ENCODE measurements at regions of chr2 and their contacts with region 1.

Region 1: DNA sequence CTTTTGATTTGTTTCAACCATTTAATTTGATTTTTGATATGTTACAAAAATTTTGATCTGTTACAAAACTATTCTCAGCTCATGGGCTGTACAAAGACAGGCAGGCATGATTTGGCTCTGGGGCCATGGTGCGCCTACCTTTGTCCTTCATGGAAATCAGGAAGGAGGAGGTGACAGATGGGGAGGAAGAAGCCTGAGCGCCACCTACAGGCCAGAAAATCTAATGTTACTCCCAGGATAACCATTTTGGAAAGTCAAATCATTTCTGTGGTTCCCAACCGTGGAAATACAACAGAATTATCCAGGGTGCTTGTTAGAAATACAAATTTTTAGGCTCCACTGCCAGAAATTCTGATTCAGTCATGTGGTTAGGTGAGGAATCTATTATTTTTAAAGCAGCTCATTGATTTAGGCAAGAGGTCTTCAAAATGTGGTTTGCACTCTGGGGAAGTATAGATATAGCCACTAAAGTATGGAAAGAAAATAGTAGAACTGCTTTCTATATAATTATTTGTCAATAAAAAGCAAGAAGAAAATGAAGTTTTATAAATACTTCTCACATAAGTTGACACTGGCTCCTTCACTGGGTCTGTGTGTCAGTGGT is 93.9 kb downstream of the EVA1A start:
- DNase-seq: no peak
- ATAC-seq: peak; percentile 69
- H3K4me3 ChIP-seq: no peak overlapping the region
- H3K27ac ChIP-seq: no peak overlapping the region
- H3K4me1 ChIP-seq: no peaks in the 10 kb centered on the region
- H3K27me3 ChIP-seq: no peaks in the 10 kb centered on the region
- CTCF ChIP-seq: peak; percentile 64 to 68 (median 66)
- EP300 ChIP-seq: no peak
- POLR2A ChIP-seq: no peak
- RAD21 ChIP-seq: peak; percentile 81

Region 2: DNA sequence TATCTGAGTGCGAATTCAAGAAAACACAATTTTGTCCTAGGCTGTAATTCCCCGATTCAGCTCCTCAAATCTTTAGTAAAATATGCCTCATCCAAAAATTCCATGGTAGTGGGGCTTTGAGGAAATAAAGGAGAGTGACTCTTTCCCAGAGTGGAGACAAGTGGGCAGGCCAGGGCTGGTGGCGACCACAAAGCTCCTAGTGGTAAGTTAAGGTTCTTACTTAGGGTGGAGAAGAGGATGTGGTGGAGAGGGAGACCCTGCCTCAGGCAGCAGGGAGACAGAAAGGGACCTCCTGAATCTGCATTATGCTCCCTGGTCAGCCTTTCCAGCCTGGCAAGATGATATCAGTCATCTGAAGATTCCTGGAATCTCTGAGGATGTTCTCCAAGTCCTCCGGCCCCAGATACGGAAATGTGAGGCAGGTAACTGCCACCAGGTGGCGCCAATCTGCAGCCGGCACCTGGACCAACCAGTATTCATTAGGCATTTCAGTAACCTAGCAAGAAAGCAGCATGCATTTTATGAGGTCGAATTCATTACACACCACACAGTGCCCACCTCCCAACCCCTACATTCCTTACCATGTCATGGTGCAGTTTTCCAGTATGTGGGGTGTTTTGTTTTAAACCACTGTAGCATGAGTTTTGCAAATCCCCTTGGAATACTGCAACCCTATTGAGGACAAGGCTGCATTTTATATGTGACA is 402.0 kb before region 1 on chr2:
- CTCF ChIA-PET with region 1: interaction called, 33 read pairs
- POLR2A ChIA-PET with region 1: no interaction called
- RAD21 ChIA-PET with region 1: interaction called, 7 read pairs
- SMC1A ChIA-PET with region 1: interaction called, 24 read pairs
- in situ Hi-C with region 1: no loop called
- intact Hi-C with region 1: no loop called
- DNase-seq: no peak
- ATAC-seq: peak; percentile 91
- H3K4me3 ChIP-seq: no peak overlapping the region
- H3K27ac ChIP-seq: no peak overlapping the region
- H3K4me1 ChIP-seq: no peaks in the 10 kb centered on the region
- H3K27me3 ChIP-seq: no peaks in the 10 kb centered on the region
- CTCF ChIP-seq: peak; percentile 67 to 92 (median 89)
- EP300 ChIP-seq: no peak
- POLR2A ChIP-seq: no peak
- RAD21 ChIP-seq: peak; percentile 78

Region 3: DNA sequence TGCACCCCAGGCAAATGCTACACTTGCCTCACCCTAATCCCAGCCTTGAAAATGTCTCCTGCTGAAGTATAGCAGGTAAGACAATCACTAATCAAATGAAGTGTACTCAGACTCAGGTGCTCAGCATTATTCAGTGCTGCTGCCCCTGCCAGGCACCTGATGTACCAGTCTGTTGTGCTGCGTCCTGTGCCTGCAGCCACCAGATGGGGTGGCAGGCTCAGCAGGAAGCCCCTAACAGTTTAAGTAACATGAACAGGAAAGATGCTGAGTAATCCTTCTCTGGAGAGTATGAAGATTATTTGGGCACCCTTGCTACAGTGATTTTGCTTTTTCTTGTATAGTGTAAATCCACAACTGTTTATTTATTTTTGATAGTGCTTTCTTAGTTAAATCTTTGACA is 336.6 kb before region 1 on chr2:
- CTCF ChIA-PET with region 1: interaction called, 12 read pairs
- POLR2A ChIA-PET with region 1: no interaction called
- RAD21 ChIA-PET with region 1: no interaction called
- SMC1A ChIA-PET with region 1: no interaction called
- in situ Hi-C with region 1: no loop called
- intact Hi-C with region 1: no loop called
- DNase-seq: no peak
- ATAC-seq: peak; percentile 64
- H3K4me3 ChIP-seq: no peak overlapping the region
- H3K27ac ChIP-seq: no peak overlapping the region
- H3K4me1 ChIP-seq: no peaks in the 10 kb centered on the region
- H3K27me3 ChIP-seq: no peaks in the 10 kb centered on the region
- CTCF ChIP-seq: peak; percentile 5 to 27 (median 24); a peak in 2 of 6 replicates
- EP300 ChIP-seq: no peak
- POLR2A ChIP-seq: no peak
- RAD21 ChIP-seq: peak; percentile 50; the same call in 1 of the 2 replicates

Region 4: GRCh38 chr2:75199428-75200011 is 267.3 kb before region 1 on chr2 and contains the start of gene TACR1:
- CTCF ChIA-PET with region 1: interaction called, 58 read pairs
- POLR2A ChIA-PET with region 1: no interaction called
- RAD21 ChIA-PET with region 1: interaction called, 9 read pairs
- SMC1A ChIA-PET with region 1: interaction called, 31 read pairs
- in situ Hi-C with region 1: no loop called
- intact Hi-C with region 1: loop called (anchors 1 kb)
- DNase-seq: peak; percentile 35
- ATAC-seq: peak; percentile 91
- H3K4me3 ChIP-seq: peak within 1 kb of the TSS; percentile 57
- H3K27ac ChIP-seq: no peak within 1 kb of the TSS
- H3K4me1 ChIP-seq: peaks cover 4% of the 10 kb centered on the region; the same call in 1 of the 2 replicates
- H3K27me3 ChIP-seq: peaks cover 5 to 11% of the 10 kb centered on the region in 2 experiments
- CTCF ChIP-seq: peak; percentile 56 to 69 (median 64)
- EP300 ChIP-seq: 0 out of 4 replicates have a peak, but pooled peaks of 1 of the 2 experiments have one; percentile 22
- POLR2A ChIP-seq: no peak
- RAD21 ChIP-seq: peak; percentile 73
- polyA plus RNA-seq, gene TACR1: 0.04 to 0.05 TPM

Region 5: GRCh38 chr2:75416420-75417342 is 50.1 kb before region 1 on chr2:
- CTCF ChIA-PET with region 1: interaction called, 68 read pairs
- POLR2A ChIA-PET with region 1: no interaction called
- RAD21 ChIA-PET with region 1: interaction called, 10 read pairs
- SMC1A ChIA-PET with region 1: interaction called, 22 read pairs
- in situ Hi-C with region 1: no loop called
- intact Hi-C with region 1: no loop called
- DNase-seq: peak; percentile 38
- ATAC-seq: peak; percentile 85
- H3K4me3 ChIP-seq: peak overlapping the region; percentile 69
- H3K27ac ChIP-seq: peak overlapping the region; percentile 77
- H3K4me1 ChIP-seq: no peaks in the 10 kb centered on the region
- H3K27me3 ChIP-seq: no peaks in the 10 kb centered on the region
- CTCF ChIP-seq: no peak
- EP300 ChIP-seq: no peak
- POLR2A ChIP-seq: 0 out of 2 replicates have a peak, but pooled peaks have one; percentile 36
- RAD21 ChIP-seq: no peak

Region 6: GRCh38 chr2:75454241-75454620 is 12.6 kb before region 1 on chr2:
- CTCF ChIA-PET with region 1: interaction called, 84 read pairs
- POLR2A ChIA-PET with region 1: no interaction called
- RAD21 ChIA-PET with region 1: interaction called, 8 read pairs
- SMC1A ChIA-PET with region 1: interaction called, 18 read pairs
- in situ Hi-C with region 1: no loop called
- intact Hi-C with region 1: no loop called
- DNase-seq: no peak
- ATAC-seq: no peak
- H3K4me3 ChIP-seq: no peak overlapping the region
- H3K27ac ChIP-seq: no peak overlapping the region
- H3K4me1 ChIP-seq: peaks cover 3% of the 10 kb centered on the region
- H3K27me3 ChIP-seq: no peaks in the 10 kb centered on the region
- CTCF ChIP-seq: no peak
- EP300 ChIP-seq: no peak
- POLR2A ChIP-seq: no peak
- RAD21 ChIP-seq: no peak

Region 7: GRCh38 chr2:75627895-75628504 is 161.2 kb after region 1 on chr2:
- CTCF ChIA-PET with region 1: interaction called, 12 read pairs
- POLR2A ChIA-PET with region 1: no interaction called
- RAD21 ChIA-PET with region 1: interaction called, 7 read pairs
- SMC1A ChIA-PET with region 1: interaction called, 10 read pairs
- in situ Hi-C with region 1: no loop called
- intact Hi-C with region 1: loop called (anchors 5 kb)
- DNase-seq: no peak
- ATAC-seq: peak; percentile 96
- H3K4me3 ChIP-seq: no peak overlapping the region
- H3K27ac ChIP-seq: no peak overlapping the region
- H3K4me1 ChIP-seq: no peaks in the 10 kb centered on the region
- H3K27me3 ChIP-seq: peaks cover 0 to 2% of the 10 kb centered on the region in 2 experiments; a peak in 1 of 4 replicates
- CTCF ChIP-seq: peak; percentile 86 to 97 (median 91)
- EP300 ChIP-seq: no peak
- POLR2A ChIP-seq: no peak
- RAD21 ChIP-seq: peak; percentile 80